ENCODE measurements at regions of chr2 and their contacts with region 1.

Region 1: GRCh38 chr2:6896930-6897759 is 19.6 kb downstream of the RSAD2 start:
- DNase-seq: no peak
- ATAC-seq: no peak
- H3K4me3 Mint-ChIP-seq: no peak overlapping the region
- H3K27ac Mint-ChIP-seq: no peak overlapping the region
- H3K4me1 Mint-ChIP-seq: no peaks in the 10 kb centered on the region
- H3K27me3 Mint-ChIP-seq: no peaks in the 10 kb centered on the region
- CTCF ChIP-seq: peak; percentile 53

Region 2: GRCh38 chr2:6927186-6927585 is 30.0 kb after region 1 on chr2:
- CTCF ChIA-PET with region 1: no interaction called
- POLR2A ChIA-PET with region 1: no interaction called
- intact Hi-C with region 1: no loop called
- DNase-seq: no peak
- ATAC-seq: no peak
- H3K4me3 Mint-ChIP-seq: no peak overlapping the region
- H3K27ac Mint-ChIP-seq: no peak overlapping the region
- H3K4me1 Mint-ChIP-seq: no peaks in the 10 kb centered on the region
- H3K27me3 Mint-ChIP-seq: peaks cover 4% of the 10 kb centered on the region
- CTCF ChIP-seq: no peak

Region 3: GRCh38 chr2:7014174-7014640 is 117.1 kb after region 1 on chr2:
- CTCF ChIA-PET with region 1: no interaction called
- POLR2A ChIA-PET with region 1: no interaction called
- intact Hi-C with region 1: loop called (anchors 1 kb)
- DNase-seq: no peak
- ATAC-seq: peak; percentile 42
- H3K4me3 Mint-ChIP-seq: no peak overlapping the region
- H3K27ac Mint-ChIP-seq: no peak overlapping the region
- H3K4me1 Mint-ChIP-seq: peaks cover 5% of the 10 kb centered on the region
- H3K27me3 Mint-ChIP-seq: no peaks in the 10 kb centered on the region
- CTCF ChIP-seq: no peak

Region 4: DNA sequence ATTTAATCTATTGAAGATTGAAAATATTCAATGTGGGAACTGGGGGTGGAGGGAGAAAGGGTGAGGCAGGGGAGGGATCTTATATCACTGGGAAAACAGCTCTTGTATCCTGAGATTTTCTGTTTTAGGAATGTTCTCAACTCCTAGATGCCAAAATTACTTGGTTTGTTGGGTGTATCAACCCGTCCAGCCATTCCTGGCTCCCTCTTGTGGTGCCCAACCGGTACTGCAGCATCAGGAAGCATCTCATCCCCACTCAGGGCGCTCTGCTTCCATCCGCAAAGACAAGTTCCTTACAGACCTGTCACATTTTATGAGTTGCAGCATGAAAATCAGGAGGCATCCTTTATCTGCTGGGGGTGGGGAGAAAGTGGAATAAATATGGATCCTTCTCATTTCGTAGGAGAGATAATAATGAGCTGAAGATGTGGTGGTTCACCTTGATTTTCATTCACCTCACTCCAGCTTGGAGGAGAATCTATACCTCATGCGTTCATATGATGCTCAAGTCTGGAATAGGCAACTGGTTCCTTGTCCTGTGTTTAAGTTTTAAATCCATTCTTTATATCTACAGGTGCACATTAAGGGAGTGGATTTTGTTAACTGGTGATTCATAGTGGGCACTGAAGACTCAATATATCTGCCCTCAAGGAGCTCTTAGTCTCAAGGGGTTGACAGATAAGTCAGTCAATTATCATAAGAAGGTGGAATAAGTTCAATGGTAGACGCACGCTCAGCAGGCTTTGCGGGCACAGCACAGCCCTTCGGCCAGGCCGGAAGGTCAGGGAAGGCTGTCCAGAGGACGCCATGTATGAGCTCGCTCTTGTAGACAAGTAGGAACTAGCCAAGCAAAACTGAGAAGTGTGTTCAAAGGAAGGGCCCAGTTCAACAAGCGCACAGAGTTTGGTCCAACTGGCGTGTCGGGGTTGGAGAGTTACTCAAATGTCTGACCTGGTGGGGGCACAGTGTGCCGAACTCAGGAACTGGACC is 147.4 kb after region 1 on chr2:
- CTCF ChIA-PET with region 1: interaction called, 36 read pairs
- POLR2A ChIA-PET with region 1: no interaction called
- intact Hi-C with region 1: loop called (anchors 1 kb)
- DNase-seq: peak; percentile 32
- ATAC-seq: peak; percentile 65
- H3K4me3 Mint-ChIP-seq: no peak overlapping the region
- H3K27ac Mint-ChIP-seq: no peak overlapping the region
- H3K4me1 Mint-ChIP-seq: peaks cover 3% of the 10 kb centered on the region
- H3K27me3 Mint-ChIP-seq: peaks cover 34% of the 10 kb centered on the region
- CTCF ChIP-seq: peak; percentile 68

Region 5: DNA sequence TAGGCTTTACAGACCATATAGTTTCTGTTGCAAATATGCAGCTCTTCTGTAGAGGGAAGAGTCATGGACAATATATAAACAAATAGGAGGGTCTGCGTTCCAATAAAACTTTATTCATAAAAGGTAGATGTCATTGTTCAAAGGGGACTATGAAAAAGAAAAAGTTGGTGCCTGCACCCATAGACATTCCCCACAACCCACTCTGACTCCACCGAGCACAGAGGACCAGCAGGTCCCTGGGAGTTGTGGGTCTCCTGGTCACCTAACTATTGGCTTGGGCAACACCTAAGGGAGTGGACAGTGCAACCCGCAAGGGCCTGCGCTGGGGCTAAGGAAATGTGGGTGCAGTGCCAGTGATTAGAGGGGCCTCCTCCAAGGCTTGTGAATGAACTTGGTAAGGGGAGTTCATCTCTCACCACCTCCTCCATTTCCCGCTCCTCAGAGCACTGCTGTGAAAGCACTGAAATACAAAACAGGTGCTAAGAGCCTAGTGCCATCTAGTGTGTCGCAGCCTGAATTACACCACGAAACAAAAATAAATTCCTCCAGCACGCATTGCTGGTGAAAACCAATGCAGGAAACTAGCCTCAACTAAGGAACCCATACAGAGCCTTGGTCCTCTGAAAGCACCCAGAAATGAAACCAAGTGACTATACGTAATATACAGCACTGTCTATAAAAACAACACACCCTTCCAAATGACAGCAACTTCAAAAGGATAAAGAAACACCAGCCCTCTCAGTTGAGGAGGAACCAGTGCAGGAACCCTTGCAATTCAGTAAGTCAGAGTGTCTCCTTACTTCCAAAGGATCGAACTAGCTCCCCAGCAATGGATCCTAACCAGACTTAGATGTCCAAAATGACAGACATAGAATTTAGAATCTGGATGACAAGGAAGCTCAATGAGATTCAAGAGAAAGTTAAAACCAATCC is 186.7 kb after region 1 on chr2:
- CTCF ChIA-PET with region 1: interaction called, 5 read pairs
- POLR2A ChIA-PET with region 1: no interaction called
- intact Hi-C with region 1: loop called (anchors 1 kb)
- DNase-seq: no peak
- ATAC-seq: peak; percentile 40
- H3K4me3 Mint-ChIP-seq: no peak overlapping the region
- H3K27ac Mint-ChIP-seq: no peak overlapping the region
- H3K4me1 Mint-ChIP-seq: no peaks in the 10 kb centered on the region
- H3K27me3 Mint-ChIP-seq: peaks cover 16% of the 10 kb centered on the region
- CTCF ChIP-seq: no peak